MCF 10A (cell line): ENCODE measurements at regions of chrX and their contacts with region 1.

Region 1: GRCh38 chrX:17697191-17697590 is 40.1 kb upstream of the SCML1 start:
- DNase-seq: peak; percentile 41
- H3K4me3 Mint-ChIP-seq: no peak overlapping the region
- H3K27ac Mint-ChIP-seq: no peak overlapping the region
- H3K4me1 Mint-ChIP-seq: no peaks in the 10 kb centered on the region
- H3K27me3 Mint-ChIP-seq: peaks cover 31% of the 10 kb centered on the region
- CTCF ChIP-seq: peak; percentile 12

Region 2: DNA sequence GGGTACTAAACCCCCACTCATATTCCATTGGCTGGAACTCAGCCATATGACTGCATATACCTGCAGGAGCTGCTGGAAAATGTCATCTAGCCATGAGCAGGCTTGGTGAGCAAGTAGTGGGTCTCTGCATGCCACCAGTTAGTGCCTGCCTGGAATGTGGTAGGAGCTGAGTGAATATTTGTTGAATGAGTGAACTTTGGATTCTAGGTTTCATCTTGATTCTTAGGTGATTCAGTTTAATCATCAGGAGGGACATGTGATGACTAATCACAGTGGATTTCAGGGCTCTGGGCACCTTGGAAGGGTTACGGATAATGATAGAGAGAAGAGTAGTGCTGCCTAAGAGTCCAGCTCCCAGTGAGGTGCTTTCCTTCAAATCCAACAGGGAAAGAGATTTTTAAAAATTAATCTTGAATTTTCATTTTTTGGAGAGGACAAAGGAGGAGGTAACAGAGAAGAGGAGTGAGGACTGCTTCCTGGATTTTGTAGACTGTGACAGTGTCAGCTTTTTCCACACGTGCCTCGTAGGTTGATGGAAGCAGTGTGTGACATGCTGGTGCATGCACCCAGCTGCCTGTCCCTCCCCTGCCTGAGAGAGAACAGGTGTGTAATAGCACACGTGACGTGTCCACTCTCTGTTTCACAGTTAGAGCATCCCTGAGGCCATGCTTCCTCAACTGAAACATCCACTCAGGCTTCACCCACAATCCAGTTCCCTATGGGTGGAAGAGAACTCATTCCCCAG is 291.8 kb before region 1 on chrX:
- CTCF ChIA-PET with region 1: no interaction called
- POLR2A ChIA-PET with region 1: no interaction called
- intact Hi-C with region 1: no loop called
- DNase-seq: peak; percentile 68
- H3K4me3 Mint-ChIP-seq: peak overlapping the region; percentile 2
- H3K27ac Mint-ChIP-seq: no peak overlapping the region
- H3K4me1 Mint-ChIP-seq: peaks cover 19% of the 10 kb centered on the region
- H3K27me3 Mint-ChIP-seq: no peaks in the 10 kb centered on the region
- CTCF ChIP-seq: no peak

Region 3: GRCh38 chrX:17737986-17738713 is 41.0 kb after region 1 on chrX:
- CTCF ChIA-PET with region 1: interaction called, 5 read pairs
- POLR2A ChIA-PET with region 1: no interaction called
- intact Hi-C with region 1: loop called (anchors 2 kb)
- DNase-seq: peak; percentile 47
- H3K4me3 Mint-ChIP-seq: peak overlapping the region; percentile 76
- H3K27ac Mint-ChIP-seq: peak overlapping the region; percentile 84
- H3K4me1 Mint-ChIP-seq: peaks cover 12% of the 10 kb centered on the region
- H3K27me3 Mint-ChIP-seq: peaks cover 10% of the 10 kb centered on the region
- CTCF ChIP-seq: no peak

Region 4: GRCh38 chrX:18377796-18378195 is 680.6 kb after region 1 on chrX:
- CTCF ChIA-PET with region 1: no interaction called
- POLR2A ChIA-PET with region 1: no interaction called
- intact Hi-C with region 1: loop called (anchors 5 kb)
- DNase-seq: peak; percentile 37
- H3K4me3 Mint-ChIP-seq: no peak overlapping the region
- H3K27ac Mint-ChIP-seq: no peak overlapping the region
- H3K4me1 Mint-ChIP-seq: no peaks in the 10 kb centered on the region
- H3K27me3 Mint-ChIP-seq: no peaks in the 10 kb centered on the region
- CTCF ChIP-seq: peak; percentile 31